ENCODE measurements at regions of chr3 and their contacts with region 1.

Region 1: GRCh38 chr3:5122030-5122740 is at the start of gene ARL8B:
- DNase-seq: peak; percentile 98
- H3K4me3 Mint-ChIP-seq: peak within 1 kb of the TSS; percentile 85
- H3K27ac Mint-ChIP-seq: peak within 1 kb of the TSS; percentile 96
- H3K4me1 Mint-ChIP-seq: peaks cover 23% of the 10 kb centered on the region
- H3K27me3 Mint-ChIP-seq: no peaks in the 10 kb centered on the region
- total RNA-seq, gene ARL8B: 46.8 and 50.4 TPM in 2 replicates

Region 2: DNA sequence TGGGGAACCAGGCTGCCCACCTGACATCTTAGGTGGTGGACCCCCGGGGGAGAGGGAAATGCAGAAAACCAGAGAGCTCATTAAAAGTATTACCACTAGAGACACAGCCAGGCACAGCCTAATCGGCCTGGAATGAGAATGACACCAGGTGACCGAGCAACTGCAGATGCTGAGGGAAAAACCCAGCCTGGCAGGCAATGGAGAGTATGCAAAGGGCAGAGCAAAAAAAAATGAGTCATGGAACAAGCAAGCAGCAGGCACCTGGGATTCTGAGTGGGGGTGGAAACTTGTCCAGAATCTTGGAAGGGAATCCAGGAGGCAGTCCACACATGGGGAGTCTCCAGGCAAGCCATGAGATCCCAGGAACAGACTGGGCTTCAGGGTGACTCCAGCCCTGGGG is 1506.7 kb before region 1 on chr3:
- intact Hi-C with region 1: no loop called
- DNase-seq: no peak
- H3K4me3 Mint-ChIP-seq: no peak overlapping the region
- H3K27ac Mint-ChIP-seq: no peak overlapping the region
- H3K4me1 Mint-ChIP-seq: no peaks in the 10 kb centered on the region
- H3K27me3 Mint-ChIP-seq: no peaks in the 10 kb centered on the region

Region 3: GRCh38 chr3:4303187-4304123 is 818.7 kb before region 1 on chr3 and contains the start of gene SETMAR:
- intact Hi-C with region 1: loop called (anchors 1 kb)
- DNase-seq: peak; percentile 95
- H3K4me3 Mint-ChIP-seq: peak within 1 kb of the TSS; percentile 92
- H3K27ac Mint-ChIP-seq: peak within 1 kb of the TSS; percentile 98
- H3K4me1 Mint-ChIP-seq: peaks cover 21% of the 10 kb centered on the region
- H3K27me3 Mint-ChIP-seq: peaks cover 2% of the 10 kb centered on the region
- total RNA-seq, gene SETMAR: 17.8 and 18.1 TPM in 2 replicates

Region 4: DNA sequence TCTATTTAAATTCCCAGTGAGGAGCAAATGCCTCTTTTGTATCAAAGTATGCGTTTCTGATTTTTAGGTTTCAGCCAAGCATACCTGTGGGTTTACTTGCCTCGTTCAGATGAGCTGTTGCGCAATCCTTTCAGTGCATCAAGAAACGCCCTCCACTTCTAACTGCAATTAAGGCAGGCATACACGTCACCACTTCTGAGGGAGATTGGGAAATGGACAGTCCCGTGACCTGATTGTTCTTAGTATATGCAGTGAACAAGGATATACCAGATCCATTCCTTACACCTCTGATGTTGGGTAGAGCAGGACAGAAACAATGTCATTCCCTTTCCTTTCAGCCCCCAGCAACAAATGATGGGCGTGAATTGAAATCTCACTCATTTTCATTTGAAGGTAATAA is 410.0 kb before region 1 on chr3:
- intact Hi-C with region 1: loop called (anchors 5 kb)
- DNase-seq: no peak
- H3K4me3 Mint-ChIP-seq: no peak overlapping the region
- H3K27ac Mint-ChIP-seq: no peak overlapping the region
- H3K4me1 Mint-ChIP-seq: peaks cover 27% of the 10 kb centered on the region
- H3K27me3 Mint-ChIP-seq: no peaks in the 10 kb centered on the region

Region 5: GRCh38 chr3:5151586-5151985 is 29.4 kb after region 1 on chr3:
- intact Hi-C with region 1: no loop called
- DNase-seq: no peak
- H3K4me3 Mint-ChIP-seq: no peak overlapping the region
- H3K27ac Mint-ChIP-seq: no peak overlapping the region
- H3K4me1 Mint-ChIP-seq: peaks cover 13% of the 10 kb centered on the region
- H3K27me3 Mint-ChIP-seq: no peaks in the 10 kb centered on the region

Region 6: DNA sequence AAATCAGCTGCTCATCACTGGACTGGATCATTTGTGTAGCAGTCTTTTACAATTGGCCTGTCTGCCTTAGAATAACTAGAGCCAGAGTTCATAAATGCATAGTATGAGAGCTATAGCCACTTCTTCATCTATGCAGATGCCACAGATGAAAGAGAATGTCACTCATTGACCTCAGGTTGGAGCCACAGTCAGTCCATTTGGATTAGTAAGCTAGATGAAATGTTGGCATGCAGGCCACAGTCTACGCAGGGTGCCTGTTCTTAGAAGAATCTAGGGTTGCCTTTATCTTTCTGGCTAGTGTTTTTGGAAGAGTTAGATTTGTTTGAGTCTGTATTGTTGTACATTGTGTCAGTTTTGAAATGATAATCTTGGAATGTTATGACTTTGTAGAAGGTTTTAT is 39.9 kb after region 1 on chr3:
- intact Hi-C with region 1: loop called (anchors 5 kb)
- DNase-seq: no peak
- H3K4me3 Mint-ChIP-seq: no peak overlapping the region
- H3K27ac Mint-ChIP-seq: no peak overlapping the region
- H3K4me1 Mint-ChIP-seq: peaks cover 42% of the 10 kb centered on the region
- H3K27me3 Mint-ChIP-seq: no peaks in the 10 kb centered on the region

Region 7: DNA sequence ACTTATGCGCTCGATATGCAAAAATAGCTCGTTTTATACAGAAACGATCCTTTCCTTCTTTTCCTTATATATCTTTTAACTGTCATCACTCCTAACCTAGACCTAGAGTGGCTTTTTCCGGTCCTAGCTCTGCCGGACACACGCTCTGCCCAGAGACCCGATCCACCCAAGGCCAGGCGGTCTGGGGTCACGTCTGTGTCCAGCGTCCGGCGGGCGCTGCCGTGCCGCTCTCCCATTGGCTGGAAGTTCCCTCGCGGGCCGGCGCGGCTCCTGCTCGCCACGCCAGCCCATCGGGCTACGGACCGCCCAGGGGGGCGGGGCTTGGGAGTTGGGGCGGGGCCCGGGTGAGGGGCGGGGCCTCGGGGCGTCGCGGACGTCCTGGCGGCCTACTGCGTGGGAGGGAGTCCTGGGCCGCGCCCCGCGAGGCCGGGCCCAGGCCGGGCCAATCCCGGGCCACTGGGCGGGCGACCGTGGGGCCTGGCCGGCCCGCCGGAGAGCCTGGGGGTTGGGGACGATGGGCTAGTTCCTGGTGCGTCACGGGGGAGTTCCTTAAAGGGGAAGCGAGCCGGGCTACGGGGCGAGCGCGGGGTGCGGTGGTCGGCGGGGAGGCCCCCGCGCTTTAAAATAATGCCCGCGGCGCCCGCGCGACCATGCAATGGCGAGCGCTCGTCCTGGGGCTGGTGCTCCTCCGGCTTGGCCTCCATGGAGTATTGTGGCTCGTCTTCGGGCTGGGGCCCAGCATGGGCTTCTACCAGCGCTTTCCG is 65.2 kb after region 1 on chr3 and contains the start of gene EDEM1:
- intact Hi-C with region 1: loop called (anchors 1 kb)
- DNase-seq: peak; percentile 99
- H3K4me3 Mint-ChIP-seq: peak within 1 kb of the TSS; percentile 99
- H3K27ac Mint-ChIP-seq: peak within 1 kb of the TSS; percentile 97
- H3K4me1 Mint-ChIP-seq: peaks cover 29% of the 10 kb centered on the region
- H3K27me3 Mint-ChIP-seq: no peaks in the 10 kb centered on the region
- total RNA-seq, gene EDEM1: 167 and 168 TPM in 2 replicates

Region 8: GRCh38 chr3:5194341-5195159 is 72.4 kb after region 1 on chr3:
- intact Hi-C with region 1: loop called (anchors 1 kb)
- DNase-seq: peak; percentile 85
- H3K4me3 Mint-ChIP-seq: peak overlapping the region; percentile 79
- H3K27ac Mint-ChIP-seq: peak overlapping the region; percentile 94
- H3K4me1 Mint-ChIP-seq: peaks cover 85% of the 10 kb centered on the region
- H3K27me3 Mint-ChIP-seq: no peaks in the 10 kb centered on the region